K562 (cell line): ENCODE measurements at regions of chrX and their contacts with region 1.

Region 1: GRCh38 chrX:28586981-28587551 is at the start of gene IL1RAPL1:
- DNase-seq: no peak
- ATAC-seq: no peak
- H3K4me3 ChIP-seq: no peak within 1 kb of the TSS
- H3K27ac ChIP-seq: no peak within 1 kb of the TSS
- H3K4me1 ChIP-seq: no peaks in the 10 kb centered on the region
- H3K27me3 ChIP-seq: no peaks in the 10 kb centered on the region
- CTCF ChIP-seq: no peak
- EP300 ChIP-seq: no peak
- POLR2A ChIP-seq: no peak
- RAD21 ChIP-seq: no peak
- polyA plus RNA-seq, gene IL1RAPL1: 0.04 TPM in 1 of 2 experiments, not detected in the other

Region 2: DNA sequence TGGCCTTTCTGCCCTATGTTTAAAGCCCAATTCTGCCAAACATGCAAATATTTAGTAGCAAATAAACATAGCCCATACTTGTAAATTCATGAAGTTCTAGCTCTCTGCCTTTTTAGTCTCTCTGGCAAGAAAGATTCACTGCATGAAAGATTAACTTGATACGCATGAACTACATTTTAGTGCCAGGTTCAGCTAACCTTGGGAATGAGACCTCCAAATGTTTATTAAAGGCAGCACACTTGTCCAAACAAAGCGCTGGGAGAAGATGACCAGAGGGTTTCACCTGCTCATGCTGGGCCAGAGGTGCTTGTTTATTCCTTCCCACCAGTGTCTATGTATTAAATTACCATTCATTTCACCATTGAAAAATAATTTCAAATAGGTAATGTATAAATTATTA is 44.3 kb before region 1 on chrX:
- CTCF ChIA-PET with region 1: no interaction called
- POLR2A ChIA-PET with region 1: no interaction called
- in situ Hi-C with region 1: no loop called
- intact Hi-C with region 1: loop called (anchors 2 kb)
- DNase-seq: no peak
- ATAC-seq: no peak
- H3K4me3 ChIP-seq: no peak overlapping the region
- H3K27ac ChIP-seq: no peak overlapping the region
- H3K4me1 ChIP-seq: no peaks in the 10 kb centered on the region
- H3K27me3 ChIP-seq: no peaks in the 10 kb centered on the region
- CTCF ChIP-seq: no peak
- EP300 ChIP-seq: no peak
- POLR2A ChIP-seq: no peak
- RAD21 ChIP-seq: no peak